ENCODE measurements at regions of chr12 and their contacts with region 1.

Region 1: GRCh38 chr12:121668750-121669520 is 519 bp downstream of the MORN3 start:
- DNase-seq: peak; percentile 39 to 83
- H3K4me3 ChIP-seq: no peak overlapping the region
- H3K27ac ChIP-seq: no peak overlapping the region
- H3K4me1 ChIP-seq: peaks cover 15 to 24% (median 18%) of the 10 kb centered on the region in 4 donors
- H3K27me3 ChIP-seq: no peaks in the 10 kb centered on the region
- CTCF ChIP-seq: peak in 4 of 7 experiments; percentile 35 to 61 (median 46)
- EP300 ChIP-seq: no peak
- POLR2A ChIP-seq: no peak

Region 2: DNA sequence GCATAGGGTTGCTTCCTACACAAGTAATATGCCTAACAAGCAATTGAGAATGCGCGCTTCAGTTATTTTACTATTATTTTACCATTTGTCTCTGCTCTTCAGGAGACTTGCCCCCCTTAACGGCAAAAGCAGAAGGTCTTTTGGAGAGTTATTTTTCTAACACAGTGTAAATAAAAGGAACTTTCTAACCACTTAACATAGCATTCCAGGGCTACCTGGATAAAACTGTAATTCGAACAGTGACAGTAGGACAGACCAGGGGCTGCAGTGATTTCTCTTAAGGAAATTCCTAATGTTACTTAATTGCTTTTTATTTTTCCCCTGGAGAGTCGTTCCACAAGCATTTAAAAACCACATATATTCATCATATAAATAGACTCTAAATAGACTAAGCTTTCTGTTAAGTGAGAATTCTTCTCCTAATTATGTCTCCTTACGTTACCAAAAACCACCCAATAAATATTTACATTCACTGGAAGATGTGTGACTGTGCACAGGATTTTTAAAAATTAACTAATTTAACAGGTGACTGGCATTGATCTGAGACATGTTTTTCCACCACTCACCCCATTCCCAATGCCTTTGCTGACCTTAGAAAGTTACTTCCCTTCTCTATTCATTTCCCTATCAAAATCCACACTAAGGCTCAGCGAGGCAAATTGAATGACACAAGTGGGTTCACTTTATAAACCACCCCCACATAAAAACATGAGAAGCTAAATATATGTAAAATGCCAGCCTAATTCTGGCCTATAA is 196.6 kb before region 1 on chr12:
- intact Hi-C with region 1: no loop called
- DNase-seq: no peak
- H3K4me3 ChIP-seq: no peak overlapping the region
- H3K27ac ChIP-seq: no peak overlapping the region
- H3K4me1 ChIP-seq: peaks cover 4 to 22% (median 15%) of the 10 kb centered on the region in 4 donors
- H3K27me3 ChIP-seq: no peaks in the 10 kb centered on the region
- CTCF ChIP-seq: no peak
- EP300 ChIP-seq: no peak
- POLR2A ChIP-seq: no peak

Region 3: DNA sequence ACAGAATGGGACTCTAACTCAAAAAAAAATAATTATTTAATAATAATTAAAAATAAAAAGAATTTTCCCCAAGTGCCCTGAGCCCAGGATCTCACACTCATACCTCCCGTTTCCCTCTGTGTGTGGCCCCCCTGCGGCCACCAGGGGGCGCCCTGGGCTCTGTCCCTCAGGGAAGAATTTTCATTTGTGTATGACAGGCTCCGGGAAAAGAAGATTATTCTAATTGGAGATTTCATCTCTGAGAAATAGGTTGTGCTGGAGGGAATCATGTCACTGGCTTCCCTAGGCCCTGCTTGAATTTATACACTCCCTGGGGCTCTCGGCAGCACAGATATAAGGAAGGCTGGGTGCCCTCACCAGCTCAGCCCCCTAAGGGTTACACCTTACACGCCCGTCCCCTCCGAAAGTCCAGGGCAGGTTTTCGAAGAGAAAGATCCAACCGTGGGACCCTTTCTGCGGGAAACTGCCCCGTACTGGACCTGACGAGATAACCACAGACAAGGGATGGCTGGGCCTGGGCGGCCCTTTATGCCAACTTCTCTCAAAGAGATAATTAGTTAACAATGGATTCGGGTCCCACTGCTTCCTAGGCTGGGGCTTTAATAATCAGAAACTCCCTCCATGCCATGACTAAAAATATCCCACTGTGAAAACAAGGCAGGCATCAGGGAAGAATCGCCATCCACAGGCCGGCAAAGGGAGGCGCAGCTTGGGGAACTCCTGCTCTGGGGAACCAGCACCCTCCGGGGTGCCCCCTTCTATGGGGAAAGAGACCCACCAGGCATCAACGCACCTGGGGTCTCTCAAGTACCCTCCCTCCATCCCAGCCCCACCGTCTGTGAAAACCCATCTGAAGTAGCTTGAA is 168.8 kb before region 1 on chr12:
- intact Hi-C with region 1: loop called (anchors 10 kb)
- DNase-seq: peak; percentile 84 to 90
- H3K4me3 ChIP-seq: peak overlapping the region in 3 of 4 donors; percentile 7 to 27 (median 16)
- H3K27ac ChIP-seq: peak overlapping the region in 4 of 5 donors; percentile 18 to 66 (median 53)
- H3K4me1 ChIP-seq: peaks cover 0 to 14% (median 10%) of the 10 kb centered on the region in 4 donors
- H3K27me3 ChIP-seq: no peaks in the 10 kb centered on the region
- CTCF ChIP-seq: peak in 5 of 7 experiments; percentile 65 to 99 (median 95)
- EP300 ChIP-seq: no peak
- POLR2A ChIP-seq: no peak

Region 4: DNA sequence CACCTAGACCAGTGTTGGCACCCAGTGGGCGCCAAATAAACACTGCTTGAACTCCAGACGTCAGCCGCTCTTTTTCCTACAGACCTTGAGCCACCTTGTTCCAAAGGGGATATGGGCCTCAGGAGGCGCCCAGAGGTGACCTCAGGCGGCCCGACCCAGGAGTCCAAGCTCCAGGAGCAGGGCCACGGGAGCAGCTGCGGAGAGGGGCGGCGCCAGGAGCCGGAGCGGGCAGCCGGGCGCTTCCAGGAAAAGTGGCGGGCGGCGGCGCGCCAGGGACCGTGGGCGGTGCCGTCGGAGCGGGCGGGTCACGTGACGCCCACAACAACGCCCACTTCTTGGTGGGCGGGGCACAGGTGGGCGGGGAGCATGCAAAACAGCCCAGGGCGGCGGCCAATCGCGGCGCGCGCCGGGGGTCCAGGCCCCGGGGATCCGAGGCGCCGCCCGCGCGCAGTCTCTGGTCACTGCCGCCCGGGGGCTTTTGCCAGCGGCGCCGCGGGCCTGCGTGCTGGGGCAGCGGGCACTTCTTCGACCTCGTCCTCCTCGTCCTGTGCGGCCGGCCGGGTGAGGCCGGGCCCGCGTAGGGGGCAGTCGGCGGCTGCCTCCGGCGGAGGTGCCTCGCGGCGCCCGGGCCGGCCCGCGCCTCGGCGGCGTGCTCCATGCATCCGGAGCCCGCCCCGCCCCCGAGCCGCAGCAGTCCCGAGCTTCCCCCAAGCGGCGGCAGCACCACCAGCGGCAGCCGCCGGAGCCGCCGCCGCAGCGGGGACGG is 42.7 kb before region 1 on chr12 and contains the start of gene ORAI1:
- intact Hi-C with region 1: loop called (anchors 10 kb)
- DNase-seq: peak; percentile 99
- H3K4me3 ChIP-seq: peak within 1 kb of the TSS; percentile 63 to 89 (median 69)
- H3K27ac ChIP-seq: peak within 1 kb of the TSS; percentile 94 to 99 (median 96)
- H3K4me1 ChIP-seq: peaks cover 38 to 61% (median 50%) of the 10 kb centered on the region in 4 donors
- H3K27me3 ChIP-seq: no peaks in the 10 kb centered on the region
- CTCF ChIP-seq: no peak
- EP300 ChIP-seq: no peak
- POLR2A ChIP-seq: no peak
- total RNA-seq, gene ORAI1: 0.45 to 37.9 (median 7.9) TPM

Region 5: DNA sequence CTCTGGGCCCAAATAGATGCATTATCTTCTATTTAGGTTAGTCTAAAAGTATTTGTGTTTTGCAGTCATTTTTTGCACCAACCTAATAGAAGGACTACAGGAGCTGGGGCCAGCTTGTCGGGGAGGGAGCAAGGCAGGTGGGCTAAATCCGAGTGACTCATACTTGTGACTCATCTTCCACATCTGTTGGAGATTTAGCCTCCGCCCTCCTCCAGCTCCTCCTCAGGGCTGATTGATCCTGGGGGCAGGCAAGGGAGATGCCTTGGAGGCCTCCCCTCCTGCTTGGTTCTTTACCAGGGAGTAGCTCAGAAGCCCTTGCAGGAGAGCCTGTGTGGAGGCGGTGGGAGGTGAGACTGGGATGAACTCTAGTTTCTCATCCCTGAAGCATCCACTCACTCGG is 96.6 kb after region 1 on chr12:
- intact Hi-C with region 1: no loop called
- DNase-seq: peak in 1 of 2 donors; percentile 57
- H3K4me3 ChIP-seq: no peak overlapping the region
- H3K27ac ChIP-seq: peak overlapping the region in 2 of 5 donors; percentile 34 to 75
- H3K4me1 ChIP-seq: peaks cover 0 to 48% (median 19%) of the 10 kb centered on the region in 4 donors
- H3K27me3 ChIP-seq: no peaks in the 10 kb centered on the region
- CTCF ChIP-seq: no peak
- EP300 ChIP-seq: no peak
- POLR2A ChIP-seq: no peak

Measured in stomach (tissue), 19 donors.